ENCODE measurements at regions of chr12 and their contacts with region 1.

Region 1: DNA sequence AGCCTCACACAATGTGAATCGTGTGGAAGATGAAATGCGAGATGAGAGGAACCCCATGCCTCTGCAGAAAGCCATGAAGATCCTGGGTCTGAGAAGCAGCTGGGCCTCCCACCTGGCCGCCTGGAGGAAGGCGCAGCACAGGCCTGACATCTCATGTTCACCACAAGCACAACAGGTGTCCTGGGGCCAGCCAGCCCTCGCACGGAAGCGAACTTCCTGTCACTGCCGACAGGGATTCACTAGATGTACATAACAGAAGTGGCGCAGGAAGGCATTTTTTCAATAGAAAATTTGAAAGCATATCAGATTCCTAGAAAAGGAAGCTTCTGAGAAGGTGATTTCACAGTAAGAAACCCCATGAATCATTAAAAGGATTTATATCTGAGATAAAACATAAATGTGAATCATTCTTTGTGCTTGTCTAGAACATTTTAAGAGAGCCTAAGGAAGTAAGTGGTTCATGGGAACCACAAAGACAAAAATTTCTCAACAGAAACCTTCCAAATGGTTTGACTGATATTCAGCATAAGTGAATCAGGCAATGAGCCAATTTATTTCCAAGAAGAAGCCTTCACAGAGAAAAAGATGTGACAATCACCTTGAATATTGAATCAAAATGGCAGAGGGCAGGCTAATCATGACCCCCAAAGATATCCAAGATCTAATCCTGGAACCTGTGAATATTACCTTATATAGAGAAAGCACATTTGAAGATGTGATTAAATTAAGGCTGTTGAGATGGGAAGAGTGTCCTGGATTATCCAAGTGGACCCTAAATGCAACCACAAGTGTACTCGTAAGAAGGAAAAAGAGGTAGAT is 311.9 kb downstream of the DUSP6 start:
- DNase-seq: peak; percentile 93
- H3K4me3 Mint-ChIP-seq: peak overlapping the region; percentile 18
- H3K27ac Mint-ChIP-seq: peak overlapping the region; percentile 98
- H3K4me1 Mint-ChIP-seq: peaks cover 57% of the 10 kb centered on the region
- H3K27me3 Mint-ChIP-seq: peaks cover 1% of the 10 kb centered on the region

Region 2: GRCh38 chr12:89019408-89020120 is 20.8 kb before region 1 on chr12:
- CTCF ChIA-PET with region 1: interaction called, 28 read pairs
- POLR2A ChIA-PET with region 1: interaction called, 12 read pairs
- intact Hi-C with region 1: loop called (anchors 1 kb)
- DNase-seq: peak; percentile 79
- H3K4me3 Mint-ChIP-seq: no peak overlapping the region
- H3K27ac Mint-ChIP-seq: no peak overlapping the region
- H3K4me1 Mint-ChIP-seq: peaks cover 8% of the 10 kb centered on the region
- H3K27me3 Mint-ChIP-seq: peaks cover 5% of the 10 kb centered on the region

Region 3: DNA sequence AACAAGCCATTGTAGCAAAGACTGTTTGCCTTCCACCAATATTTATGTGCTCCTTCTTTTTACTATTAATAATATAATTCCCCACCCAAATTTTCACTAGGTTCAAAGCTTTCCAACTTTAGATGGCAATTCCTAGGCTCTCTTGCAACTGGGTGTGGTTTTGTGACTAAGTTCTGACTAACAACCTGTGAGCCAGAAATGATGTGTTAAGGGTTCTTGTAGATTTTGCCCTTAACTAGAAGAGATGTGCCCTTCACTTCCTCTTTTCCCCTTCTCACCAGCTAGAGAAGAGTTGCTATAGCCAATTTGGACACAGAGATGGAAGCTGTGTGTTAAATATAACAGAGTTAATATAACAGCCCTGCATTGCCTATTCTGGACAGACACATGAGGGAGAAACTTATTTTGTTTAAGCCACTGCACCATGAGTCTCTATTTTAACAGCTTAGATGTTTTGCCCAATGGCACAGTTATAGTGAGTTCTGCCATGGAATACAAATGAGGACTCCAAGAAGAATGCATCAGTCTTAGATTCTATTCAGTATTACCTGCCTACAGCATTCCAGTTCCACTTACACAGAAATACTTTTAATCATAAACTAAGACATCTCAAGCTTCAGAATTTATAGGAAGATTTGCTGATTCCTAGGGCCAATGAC is 95.8 kb after region 1 on chr12:
- CTCF ChIA-PET with region 1: interaction called, 4 read pairs
- POLR2A ChIA-PET with region 1: interaction called, 5 read pairs
- intact Hi-C with region 1: loop called (anchors 1 kb)
- DNase-seq: no peak
- H3K4me3 Mint-ChIP-seq: no peak overlapping the region
- H3K27ac Mint-ChIP-seq: no peak overlapping the region
- H3K4me1 Mint-ChIP-seq: peaks cover 31% of the 10 kb centered on the region
- H3K27me3 Mint-ChIP-seq: no peaks in the 10 kb centered on the region

Region 4: GRCh38 chr12:89225808-89226411 is 185.6 kb after region 1 on chr12:
- CTCF ChIA-PET with region 1: interaction called, 3 read pairs
- POLR2A ChIA-PET with region 1: interaction called, 18 read pairs
- intact Hi-C with region 1: loop called (anchors 1 kb)
- DNase-seq: peak; percentile 72
- H3K4me3 Mint-ChIP-seq: peak overlapping the region; percentile 34
- H3K27ac Mint-ChIP-seq: peak overlapping the region; percentile 99
- H3K4me1 Mint-ChIP-seq: peaks cover 65% of the 10 kb centered on the region
- H3K27me3 Mint-ChIP-seq: no peaks in the 10 kb centered on the region

Region 5: DNA sequence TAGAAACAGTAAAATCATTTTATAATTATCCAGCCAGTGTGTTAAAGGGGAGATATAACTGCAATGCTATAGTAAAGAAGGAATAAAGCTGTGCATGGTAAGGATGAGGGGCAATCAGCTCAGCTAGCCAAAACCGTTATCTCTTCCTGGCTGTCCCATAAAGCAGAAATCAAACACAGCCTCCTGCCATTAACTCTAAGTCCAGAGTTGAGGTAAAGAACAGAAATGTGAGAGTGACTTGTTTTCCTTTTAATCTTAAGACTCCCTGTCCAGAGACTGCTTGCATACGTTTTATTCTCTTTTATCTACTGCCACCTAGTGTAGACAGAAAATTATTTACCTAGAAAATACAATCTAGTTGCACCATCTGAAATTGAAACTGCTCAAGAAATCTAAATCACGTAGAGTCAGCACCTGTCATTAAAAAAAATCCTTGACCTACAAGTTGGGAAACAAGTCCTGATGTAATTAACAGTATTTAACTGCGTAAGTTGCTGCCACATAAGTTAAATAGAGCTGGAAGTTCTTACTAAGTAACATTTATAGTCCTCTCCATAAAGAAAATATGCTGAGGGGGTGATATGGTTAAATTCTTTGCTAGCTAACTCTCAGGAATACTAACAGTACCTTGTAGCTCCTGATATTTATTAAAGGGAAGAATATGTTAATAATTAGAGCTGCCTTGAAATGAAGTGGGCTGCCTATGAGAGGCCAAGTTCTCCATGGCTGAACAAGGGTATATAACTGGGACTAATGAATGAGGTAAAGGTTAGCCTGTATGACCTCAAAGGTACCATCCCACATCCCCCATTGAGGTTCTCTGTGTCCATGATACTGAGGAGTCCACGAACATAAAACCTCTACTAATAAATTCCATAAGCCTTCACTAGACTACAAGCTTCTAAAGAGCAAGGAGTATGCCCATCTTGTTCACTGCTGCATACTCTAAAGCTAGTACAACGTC is 421.6 kb after region 1 on chr12:
- CTCF ChIA-PET with region 1: interaction called, 18 read pairs
- POLR2A ChIA-PET with region 1: no interaction called
- intact Hi-C with region 1: no loop called
- DNase-seq: no peak
- H3K4me3 Mint-ChIP-seq: peak overlapping the region; percentile 35
- H3K27ac Mint-ChIP-seq: peak overlapping the region; percentile 60
- H3K4me1 Mint-ChIP-seq: peaks cover 13% of the 10 kb centered on the region
- H3K27me3 Mint-ChIP-seq: no peaks in the 10 kb centered on the region

Region 6: GRCh38 chr12:89756585-89757321 is 716.4 kb after region 1 on chr12:
- CTCF ChIA-PET with region 1: no interaction called
- POLR2A ChIA-PET with region 1: no interaction called
- intact Hi-C with region 1: loop called (anchors 1 kb)
- DNase-seq: no peak
- H3K4me3 Mint-ChIP-seq: peak overlapping the region; percentile 44
- H3K27ac Mint-ChIP-seq: peak overlapping the region; percentile 79
- H3K4me1 Mint-ChIP-seq: peaks cover 36% of the 10 kb centered on the region
- H3K27me3 Mint-ChIP-seq: no peaks in the 10 kb centered on the region